ENCODE measurements at regions of chr6 and their contacts with region 1.

Region 1: DNA sequence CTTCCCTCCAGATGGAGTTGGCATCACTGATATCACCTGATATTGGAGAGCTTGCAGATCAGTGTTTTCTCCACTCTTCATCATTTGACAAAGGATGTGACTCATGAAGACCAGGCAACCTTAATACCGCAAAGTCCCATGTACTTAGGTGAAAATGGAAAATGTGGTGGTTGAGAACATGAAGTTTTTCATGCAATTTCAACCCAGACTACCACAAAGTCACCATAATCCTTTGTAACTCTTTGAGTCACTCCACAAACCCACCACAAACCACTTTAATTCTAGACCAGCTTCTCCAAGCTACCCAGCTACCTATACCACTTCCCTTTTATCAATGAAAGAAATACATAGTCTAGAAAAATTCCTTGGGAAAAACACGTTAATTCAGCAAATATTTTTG is 7.1 kb downstream of the NHLRC1 start:
- DNase-seq: no peak
- ATAC-seq: no peak

Region 2: GRCh38 chr6:18004256-18004985 is 110.9 kb before region 1 on chr6:
- intact Hi-C with region 1: loop called in 1 of 2 experiments (anchors 10 kb)
- DNase-seq: no peak
- ATAC-seq: no peak